H1 (cell line): ENCODE measurements at regions of chr5 and their contacts with region 1.

Region 1: DNA sequence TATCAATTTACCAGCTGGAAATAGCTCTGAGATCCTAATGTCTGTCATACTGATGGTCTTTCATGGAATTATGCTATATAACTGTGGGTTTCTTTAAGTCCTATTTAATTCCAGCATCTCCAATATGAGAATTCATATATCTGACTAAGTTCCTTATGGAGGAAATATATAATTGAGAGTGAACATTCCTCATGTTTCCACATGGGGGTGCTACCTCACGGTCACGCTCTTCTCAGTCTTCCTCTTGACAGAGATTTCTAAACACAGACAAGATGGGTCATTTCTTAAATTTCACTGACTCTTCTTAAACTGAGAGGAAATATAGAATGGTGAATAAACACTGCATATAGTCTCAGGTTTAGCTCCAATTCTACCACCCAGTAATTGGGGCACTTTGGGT is 212.1 kb downstream of the SLF1 start:
- DNase-seq: no peak
- H3K4me3 ChIP-seq: no peak overlapping the region
- H3K27ac ChIP-seq: no peak overlapping the region
- H3K4me1 ChIP-seq: no peaks in the 10 kb centered on the region
- H3K27me3 ChIP-seq: no peaks in the 10 kb centered on the region
- CTCF ChIP-seq: peak in 2 of 3 experiments; percentile 47 to 53; a peak in 3 of 4 replicates
- EP300 ChIP-seq: no peak
- POLR2A ChIP-seq: no peak
- RAD21 ChIP-seq: peak; percentile 53 to 55

Region 2: GRCh38 chr5:94807985-94808384 is 22.5 kb before region 1 on chr5:
- CTCF ChIA-PET with region 1: interaction called, 47 read pairs
- POLR2A ChIA-PET with region 1: no interaction called
- DNase-seq: no peak
- H3K4me3 ChIP-seq: no peak overlapping the region
- H3K27ac ChIP-seq: no peak overlapping the region
- H3K4me1 ChIP-seq: no peaks in the 10 kb centered on the region
- H3K27me3 ChIP-seq: no peaks in the 10 kb centered on the region
- CTCF ChIP-seq: no peak
- EP300 ChIP-seq: no peak
- POLR2A ChIP-seq: no peak
- RAD21 ChIP-seq: peak in 1 of 2 experiments; percentile 24; a peak in 2 of 4 replicates

Region 3: DNA sequence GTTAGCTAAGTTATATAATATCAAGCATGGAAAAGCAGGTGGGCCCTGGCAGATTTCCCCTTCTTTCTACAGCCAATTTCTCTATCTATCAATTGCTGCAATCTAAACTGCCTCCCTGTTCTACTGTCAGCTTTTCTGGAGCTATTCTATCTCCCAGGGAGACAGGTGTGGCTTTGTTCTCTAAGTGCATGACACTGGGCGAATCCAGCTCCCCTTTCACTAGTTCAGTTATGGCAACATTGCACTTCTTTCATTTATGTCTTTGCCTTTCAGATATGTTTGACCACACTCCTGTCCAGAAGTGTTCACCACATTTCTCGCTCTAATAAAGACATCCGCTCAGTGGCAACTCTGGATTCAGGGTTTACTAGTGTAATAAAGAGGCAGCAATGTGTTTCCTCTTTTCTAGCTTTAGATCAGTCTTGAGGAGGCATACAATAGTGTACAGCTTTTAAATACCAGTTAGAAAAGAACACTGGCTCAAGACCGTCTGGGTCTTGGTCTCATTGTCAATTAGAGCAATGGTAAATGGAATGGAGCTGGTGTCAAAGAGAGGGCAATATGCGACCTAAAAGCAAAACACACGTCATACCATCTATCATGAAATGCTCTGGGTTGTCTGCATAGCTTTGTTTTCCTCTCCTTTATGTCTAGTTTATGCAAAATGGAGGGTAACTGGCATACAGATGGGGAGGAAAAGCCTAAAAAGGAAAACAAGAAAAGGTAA is 15.0 kb before region 1 on chr5:
- CTCF ChIA-PET with region 1: interaction called, 47 read pairs
- POLR2A ChIA-PET with region 1: interaction called, 3 read pairs
- DNase-seq: no peak
- H3K4me3 ChIP-seq: no peak overlapping the region
- H3K27ac ChIP-seq: no peak overlapping the region
- H3K4me1 ChIP-seq: no peaks in the 10 kb centered on the region
- H3K27me3 ChIP-seq: no peaks in the 10 kb centered on the region
- CTCF ChIP-seq: no peak
- EP300 ChIP-seq: no peak
- POLR2A ChIP-seq: no peak
- RAD21 ChIP-seq: no peak

Region 4: GRCh38 chr5:94820488-94820887 is 10.0 kb before region 1 on chr5:
- CTCF ChIA-PET with region 1: interaction called, 31 read pairs
- POLR2A ChIA-PET with region 1: interaction called, 3 read pairs
- DNase-seq: no peak
- H3K4me3 ChIP-seq: no peak overlapping the region
- H3K27ac ChIP-seq: no peak overlapping the region
- H3K4me1 ChIP-seq: no peaks in the 10 kb centered on the region
- H3K27me3 ChIP-seq: no peaks in the 10 kb centered on the region
- CTCF ChIP-seq: no peak
- EP300 ChIP-seq: no peak
- POLR2A ChIP-seq: no peak
- RAD21 ChIP-seq: no peak

Region 5: GRCh38 chr5:94841598-94842322 is 11.2 kb after region 1 on chr5:
- CTCF ChIA-PET with region 1: interaction called, 43 read pairs
- POLR2A ChIA-PET with region 1: no interaction called
- DNase-seq: no peak
- H3K4me3 ChIP-seq: no peak overlapping the region
- H3K27ac ChIP-seq: no peak overlapping the region
- H3K4me1 ChIP-seq: no peaks in the 10 kb centered on the region
- H3K27me3 ChIP-seq: no peaks in the 10 kb centered on the region
- CTCF ChIP-seq: no peak
- EP300 ChIP-seq: no peak
- POLR2A ChIP-seq: no peak
- RAD21 ChIP-seq: no peak

Region 6: GRCh38 chr5:94849821-94850736 is 19.6 kb after region 1 on chr5:
- CTCF ChIA-PET with region 1: interaction called, 43 read pairs
- POLR2A ChIA-PET with region 1: no interaction called
- DNase-seq: no peak
- H3K4me3 ChIP-seq: no peak overlapping the region
- H3K27ac ChIP-seq: no peak overlapping the region
- H3K4me1 ChIP-seq: peaks cover 0 to 3% (median 3%) of the 10 kb centered on the region in 4 experiments; a peak in 2 of 7 replicates
- H3K27me3 ChIP-seq: no peaks in the 10 kb centered on the region
- CTCF ChIP-seq: peak in 2 of 3 experiments; percentile 60 to 88; a peak in 2 of 4 replicates
- EP300 ChIP-seq: no peak
- POLR2A ChIP-seq: no peak
- RAD21 ChIP-seq: peak; percentile 95

Region 7: DNA sequence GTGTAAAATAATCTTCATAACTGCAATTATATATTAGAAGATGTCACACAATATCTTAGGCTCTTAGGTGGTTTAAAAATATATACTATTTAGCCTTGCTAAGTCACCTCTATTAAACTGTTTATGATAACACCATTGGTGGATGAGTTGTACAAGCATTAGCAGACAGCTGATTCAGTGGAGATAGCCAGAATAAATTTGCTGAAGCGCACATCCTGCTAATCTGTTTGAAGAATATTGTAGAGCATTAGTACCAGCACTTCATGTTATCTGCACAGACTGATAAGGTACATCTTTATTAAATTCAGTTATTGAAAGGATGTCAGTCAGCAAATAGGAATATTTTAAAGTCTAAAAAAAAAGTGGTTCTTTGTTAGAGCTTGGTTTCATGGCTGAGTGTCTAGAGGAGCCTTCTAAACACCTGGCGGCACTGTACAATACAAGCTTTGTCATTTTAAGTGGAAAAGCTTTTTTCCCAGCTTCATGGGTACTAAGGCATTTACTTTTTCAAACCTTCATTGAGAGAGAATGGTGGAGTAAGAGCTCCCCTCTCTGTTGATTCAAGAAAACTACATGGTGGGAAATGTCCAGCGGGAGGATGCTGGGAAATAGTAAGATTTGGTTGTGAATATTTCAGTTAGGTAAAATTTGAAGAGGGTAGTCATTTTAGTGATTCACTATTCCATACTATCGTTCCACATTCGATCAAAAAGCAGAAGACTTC is 63.1 kb after region 1 on chr5:
- CTCF ChIA-PET with region 1: interaction called, 31 read pairs
- POLR2A ChIA-PET with region 1: no interaction called
- DNase-seq: no peak
- H3K4me3 ChIP-seq: no peak overlapping the region
- H3K27ac ChIP-seq: no peak overlapping the region
- H3K4me1 ChIP-seq: no peaks in the 10 kb centered on the region
- H3K27me3 ChIP-seq: no peaks in the 10 kb centered on the region
- CTCF ChIP-seq: peak in 2 of 3 experiments; percentile 58 to 66; a peak in 2 of 4 replicates
- EP300 ChIP-seq: no peak
- POLR2A ChIP-seq: no peak
- RAD21 ChIP-seq: peak; percentile 93 to 94

Region 8: DNA sequence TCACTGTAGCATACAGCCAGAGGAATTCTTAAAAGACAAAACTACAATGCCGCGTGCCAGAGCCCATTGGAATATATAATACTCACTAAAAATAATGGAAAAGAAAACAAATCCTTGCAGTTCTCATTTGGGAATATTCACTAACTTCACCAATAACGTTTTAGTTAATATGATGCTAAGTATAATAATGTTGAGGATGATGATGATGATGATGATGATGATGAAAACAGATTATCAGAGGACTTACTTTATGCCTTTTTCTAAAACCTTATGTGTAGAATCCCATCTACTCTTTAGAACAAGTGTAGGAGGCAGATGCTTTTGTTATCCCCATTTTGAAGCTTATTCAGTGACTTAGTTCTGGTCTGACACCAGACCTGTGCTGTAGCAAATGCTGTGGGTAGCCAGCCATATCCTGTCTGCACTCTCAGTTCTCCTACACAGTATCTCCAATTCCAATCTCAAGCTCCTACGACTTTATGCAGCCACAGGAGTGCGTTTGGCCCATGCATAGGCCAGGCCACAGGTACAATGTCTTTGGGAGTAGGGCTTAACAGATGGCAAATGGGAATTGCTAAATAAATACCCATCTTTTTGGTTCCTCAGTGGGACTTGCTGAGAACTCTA is 161.7 kb after region 1 on chr5:
- CTCF ChIA-PET with region 1: no interaction called
- POLR2A ChIA-PET with region 1: no interaction called
- DNase-seq: no peak
- H3K4me3 ChIP-seq: no peak overlapping the region
- H3K27ac ChIP-seq: no peak overlapping the region
- H3K4me1 ChIP-seq: peaks cover 0 to 2% (median 0%) of the 10 kb centered on the region in 4 experiments; a peak in 2 of 7 replicates
- H3K27me3 ChIP-seq: no peaks in the 10 kb centered on the region
- CTCF ChIP-seq: no peak
- EP300 ChIP-seq: no peak
- POLR2A ChIP-seq: no peak
- RAD21 ChIP-seq: no peak